Naive thymus-derived CD4-positive, alpha-beta T cell (primary cell): ENCODE measurements at regions of chr1 and their contacts with region 1.

Region 1: GRCh38 chr1:205485338-205486228 is 18.9 kb upstream of the CDK18 start:
- DNase-seq: peak; percentile 37 to 75 (median 64)
- ATAC-seq: peak; percentile 84
- H3K4me3 ChIP-seq: no peak overlapping the region
- H3K4me3 Mint-ChIP-seq: no peak overlapping the region
- H3K27ac ChIP-seq: no peak overlapping the region
- H3K27ac Mint-ChIP-seq: no peak overlapping the region
- H3K4me1 ChIP-seq: peaks cover 0 to 19% of the 10 kb centered on the region in 2 donors
- H3K4me1 Mint-ChIP-seq: peaks cover 2 to 30% (median 10%) of the 10 kb centered on the region in 7 donors
- H3K27me3 ChIP-seq: peaks cover 0 to 7% of the 10 kb centered on the region in 2 donors
- H3K27me3 Mint-ChIP-seq: peaks cover 42 to 63% (median 57%) of the 10 kb centered on the region in 5 donors

Region 2: GRCh38 chr1:205335643-205336091 is 149.9 kb before region 1 on chr1:
- CTCF ChIA-PET with region 1: interaction called, 17 read pairs
- POLR2A ChIA-PET with region 1: interaction called, 4 read pairs
- intact Hi-C with region 1: loop called in 1 of 2 experiments (anchors 1 kb)
- DNase-seq: peak; percentile 55 to 81 (median 71)
- ATAC-seq: peak; percentile 96
- H3K4me3 ChIP-seq: no peak overlapping the region
- H3K4me3 Mint-ChIP-seq: no peak overlapping the region
- H3K27ac ChIP-seq: no peak overlapping the region
- H3K27ac Mint-ChIP-seq: no peak overlapping the region
- H3K4me1 ChIP-seq: no peaks in the 10 kb centered on the region
- H3K4me1 Mint-ChIP-seq: peaks cover 0 to 5% (median 0%) of the 10 kb centered on the region in 7 donors
- H3K27me3 ChIP-seq: no peaks in the 10 kb centered on the region
- H3K27me3 Mint-ChIP-seq: peaks cover 0 to 40% (median 0%) of the 10 kb centered on the region in 5 donors

Region 3: DNA sequence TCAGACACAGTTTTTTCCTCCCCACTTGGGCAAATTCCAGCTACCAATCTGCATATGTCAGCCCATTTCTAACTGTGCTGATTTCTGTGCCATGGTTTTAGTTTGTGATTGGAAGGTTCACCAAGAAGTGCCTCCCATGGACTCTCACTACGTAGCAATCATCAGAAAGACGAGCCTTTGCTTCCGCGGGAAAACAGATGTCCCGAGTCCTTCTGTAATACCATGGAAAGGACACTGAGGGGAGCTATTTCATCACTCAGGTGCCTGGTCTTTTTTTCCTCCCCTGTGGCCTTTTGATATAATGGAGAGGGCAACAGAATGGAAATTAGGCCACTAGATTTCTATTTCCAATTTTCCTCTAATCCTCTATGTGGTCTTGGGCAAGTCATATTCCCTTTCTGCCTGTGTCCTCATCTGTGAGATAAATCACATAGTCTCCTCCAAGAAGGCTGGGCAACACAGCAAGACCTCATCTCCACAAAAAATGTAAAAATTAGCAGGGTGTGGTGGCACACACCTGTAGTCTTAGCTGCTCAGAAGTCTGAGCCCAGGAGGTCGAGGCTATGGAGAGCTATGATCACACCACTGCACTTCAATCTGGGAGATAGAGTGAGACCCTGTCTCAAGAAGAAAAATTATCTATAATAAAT is 88.5 kb before region 1 on chr1:
- CTCF ChIA-PET with region 1: interaction called, 41 read pairs
- POLR2A ChIA-PET with region 1: interaction called, 3 read pairs
- intact Hi-C with region 1: loop called (anchors 1 kb)
- DNase-seq: peak in 5 of 9 donors; percentile 14 to 32 (median 15)
- ATAC-seq: peak; percentile 37
- H3K4me3 ChIP-seq: no peak overlapping the region
- H3K4me3 Mint-ChIP-seq: no peak overlapping the region
- H3K27ac ChIP-seq: no peak overlapping the region
- H3K27ac Mint-ChIP-seq: no peak overlapping the region
- H3K4me1 ChIP-seq: no peaks in the 10 kb centered on the region
- H3K4me1 Mint-ChIP-seq: peaks cover 0 to 10% (median 0%) of the 10 kb centered on the region in 7 donors
- H3K27me3 ChIP-seq: no peaks in the 10 kb centered on the region
- H3K27me3 Mint-ChIP-seq: peaks cover 3 to 46% (median 14%) of the 10 kb centered on the region in 5 donors

Region 4: GRCh38 chr1:205440476-205441317 is 44.9 kb before region 1 on chr1:
- CTCF ChIA-PET with region 1: interaction called, 4 read pairs
- POLR2A ChIA-PET with region 1: no interaction called
- intact Hi-C with region 1: loop called in 1 of 2 experiments (anchors 5 kb)
- DNase-seq: peak in 8 of 9 donors; percentile 30 to 64 (median 52)
- ATAC-seq: peak; percentile 90
- H3K4me3 ChIP-seq: peak overlapping the region; percentile 52
- H3K4me3 Mint-ChIP-seq: peak overlapping the region; percentile 79 to 90 (median 86)
- H3K27ac ChIP-seq: peak overlapping the region; percentile 48
- H3K27ac Mint-ChIP-seq: peak overlapping the region; percentile 69 to 94 (median 86)
- H3K4me1 ChIP-seq: peaks cover 17 to 34% of the 10 kb centered on the region in 2 donors
- H3K4me1 Mint-ChIP-seq: peaks cover 18 to 26% (median 23%) of the 10 kb centered on the region in 7 donors
- H3K27me3 ChIP-seq: no peaks in the 10 kb centered on the region
- H3K27me3 Mint-ChIP-seq: peaks cover 0 to 19% (median 7%) of the 10 kb centered on the region in 5 donors

Region 5: GRCh38 chr1:205523891-205524793 is 38.6 kb after region 1 on chr1:
- CTCF ChIA-PET with region 1: interaction called, 111 read pairs
- POLR2A ChIA-PET with region 1: interaction called, 5 read pairs
- intact Hi-C with region 1: loop called (anchors 1 kb)
- DNase-seq: peak; percentile 42 to 69 (median 62)
- ATAC-seq: peak; percentile 60
- H3K4me3 ChIP-seq: no peak overlapping the region
- H3K4me3 Mint-ChIP-seq: no peak overlapping the region
- H3K27ac ChIP-seq: no peak overlapping the region
- H3K27ac Mint-ChIP-seq: no peak overlapping the region
- H3K4me1 ChIP-seq: no peaks in the 10 kb centered on the region
- H3K4me1 Mint-ChIP-seq: peaks cover 0 to 3% (median 0%) of the 10 kb centered on the region in 7 donors
- H3K27me3 ChIP-seq: no peaks in the 10 kb centered on the region
- H3K27me3 Mint-ChIP-seq: peaks cover 0 to 4% (median 0%) of the 10 kb centered on the region in 5 donors